Cardiac septum (tissue), 1 donor: ENCODE measurements at regions of chr1 and their contacts with region 1.

Region 1: DNA sequence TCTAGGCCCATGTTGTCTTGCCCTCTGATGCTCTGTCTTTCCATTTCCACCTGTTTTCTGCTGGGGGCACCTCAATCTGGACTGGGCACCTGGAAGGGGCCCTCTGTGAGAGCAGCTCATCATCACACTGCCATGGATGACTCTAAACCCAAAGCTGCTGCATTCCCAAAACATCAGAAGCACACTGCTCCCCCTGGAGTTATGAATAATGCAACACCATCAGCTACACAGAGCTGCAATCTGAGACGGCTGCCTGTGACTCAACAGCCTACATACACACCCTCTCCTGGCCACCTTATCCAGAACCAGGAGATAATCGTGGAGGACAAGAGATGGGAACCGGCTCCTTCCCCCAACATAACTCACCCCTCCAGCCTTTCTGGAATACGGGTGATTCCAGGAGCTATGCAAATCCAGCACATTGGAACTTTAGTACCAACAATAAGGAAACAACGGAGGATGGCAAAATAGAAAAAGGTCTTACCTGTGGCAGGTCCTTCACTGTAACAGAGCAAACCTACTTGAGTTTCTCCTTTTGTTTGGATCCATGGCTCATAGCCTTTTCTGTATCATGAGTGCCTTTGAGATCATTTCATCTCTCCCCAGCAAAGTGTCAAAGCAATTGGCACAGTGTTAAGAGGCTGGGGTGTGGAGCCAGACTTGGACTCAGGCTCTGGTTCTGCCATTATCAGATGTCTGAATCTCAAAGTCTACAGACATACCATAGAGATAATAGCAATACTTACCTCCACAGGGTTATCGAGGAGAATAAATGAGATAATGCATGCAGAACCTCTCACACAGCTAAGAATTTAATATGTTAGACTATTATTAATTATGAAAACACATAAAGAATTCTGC is 29.3 kb downstream of the AK2 start:
- DNase-seq: no peak

Region 2: DNA sequence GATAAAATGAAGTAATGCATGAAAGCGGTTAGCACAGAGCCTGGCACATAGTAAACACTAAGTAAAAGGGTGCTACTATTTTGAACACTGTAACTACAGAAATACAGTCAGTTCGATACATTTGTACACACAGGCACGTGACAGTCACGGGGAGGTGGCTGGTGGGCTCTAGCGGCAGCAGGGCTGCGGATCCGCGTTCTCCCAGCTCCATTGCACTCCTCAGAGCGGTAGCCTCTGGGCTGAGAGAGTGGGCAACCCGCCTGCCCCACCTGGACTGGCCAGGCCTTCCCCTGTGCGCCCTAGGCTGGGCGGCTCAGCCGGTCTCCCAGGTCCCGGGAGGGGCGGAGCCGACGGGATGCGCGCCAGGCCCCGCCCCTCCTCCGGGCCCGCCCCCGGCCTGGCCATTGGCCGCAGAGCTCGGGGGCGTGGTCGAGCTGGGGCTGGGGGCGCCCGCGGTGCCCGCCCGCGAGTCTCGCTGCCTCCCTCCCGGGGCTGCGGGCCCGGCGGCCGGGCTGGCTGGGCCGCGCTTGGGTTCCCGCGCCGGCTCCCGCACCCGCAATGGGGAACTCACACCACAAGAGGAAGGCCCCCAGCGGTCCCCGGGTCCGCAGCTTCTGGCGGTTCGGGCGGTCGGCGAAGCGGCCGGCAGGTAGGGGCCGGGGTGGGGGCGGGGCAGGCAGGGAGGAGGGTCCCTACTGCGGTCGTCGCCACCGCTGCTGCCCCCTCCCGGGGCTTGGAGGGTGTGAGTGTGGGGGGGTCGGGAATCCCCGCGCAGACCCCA is 253.7 kb before region 1 on chr1:
- intact Hi-C with region 1: no loop called
- DNase-seq: no peak

Region 3: DNA sequence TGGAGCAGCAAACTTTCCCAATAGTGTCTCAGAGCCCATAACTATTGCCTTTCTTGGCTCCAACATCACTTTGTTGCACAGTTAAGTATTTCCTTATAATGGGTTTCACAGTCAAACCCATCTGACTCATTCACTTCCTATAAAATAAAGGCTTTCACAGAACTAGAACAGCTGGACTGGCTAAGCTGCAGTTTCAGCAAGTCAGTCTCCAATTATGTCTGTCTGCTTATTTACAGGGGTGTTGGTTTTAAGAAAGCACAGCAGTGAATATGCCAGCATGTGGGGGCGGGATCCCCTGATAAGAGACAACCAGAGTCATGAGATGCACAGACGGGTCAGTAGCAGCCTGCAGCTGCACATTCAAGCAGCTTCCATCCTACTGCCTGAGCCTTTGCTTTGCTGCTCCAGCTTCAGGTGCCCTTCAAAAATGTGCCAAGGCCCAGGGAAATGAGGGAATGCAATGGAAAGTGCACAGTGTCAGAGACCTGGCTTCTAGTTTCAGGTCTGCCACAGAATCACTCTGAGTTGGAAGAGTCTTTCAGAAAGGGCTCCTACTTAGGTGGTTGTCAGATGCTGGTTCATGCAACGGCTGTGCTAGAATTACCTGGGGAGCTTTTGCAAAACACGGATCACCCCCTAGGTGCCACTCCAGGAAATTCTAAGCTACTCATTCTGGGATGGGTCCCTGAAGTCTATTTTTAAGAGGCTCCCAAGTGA is 67.6 kb before region 1 on chr1:
- intact Hi-C with region 1: loop called (anchors 5 kb)
- DNase-seq: no peak

Region 4: GRCh38 chr1:32964461-32965250 is 42.8 kb before region 1 on chr1 and contains the start of gene RNF19B:
- intact Hi-C with region 1: loop called (anchors 2 kb)
- DNase-seq: peak; percentile 98
- total RNA-seq, gene RNF19B: 17.5 TPM

Region 5: GRCh38 chr1:33045246-33045645 is 37.8 kb after region 1 on chr1:
- intact Hi-C with region 1: loop called (anchors 5 kb)
- DNase-seq: peak; percentile 72

Region 6: DNA sequence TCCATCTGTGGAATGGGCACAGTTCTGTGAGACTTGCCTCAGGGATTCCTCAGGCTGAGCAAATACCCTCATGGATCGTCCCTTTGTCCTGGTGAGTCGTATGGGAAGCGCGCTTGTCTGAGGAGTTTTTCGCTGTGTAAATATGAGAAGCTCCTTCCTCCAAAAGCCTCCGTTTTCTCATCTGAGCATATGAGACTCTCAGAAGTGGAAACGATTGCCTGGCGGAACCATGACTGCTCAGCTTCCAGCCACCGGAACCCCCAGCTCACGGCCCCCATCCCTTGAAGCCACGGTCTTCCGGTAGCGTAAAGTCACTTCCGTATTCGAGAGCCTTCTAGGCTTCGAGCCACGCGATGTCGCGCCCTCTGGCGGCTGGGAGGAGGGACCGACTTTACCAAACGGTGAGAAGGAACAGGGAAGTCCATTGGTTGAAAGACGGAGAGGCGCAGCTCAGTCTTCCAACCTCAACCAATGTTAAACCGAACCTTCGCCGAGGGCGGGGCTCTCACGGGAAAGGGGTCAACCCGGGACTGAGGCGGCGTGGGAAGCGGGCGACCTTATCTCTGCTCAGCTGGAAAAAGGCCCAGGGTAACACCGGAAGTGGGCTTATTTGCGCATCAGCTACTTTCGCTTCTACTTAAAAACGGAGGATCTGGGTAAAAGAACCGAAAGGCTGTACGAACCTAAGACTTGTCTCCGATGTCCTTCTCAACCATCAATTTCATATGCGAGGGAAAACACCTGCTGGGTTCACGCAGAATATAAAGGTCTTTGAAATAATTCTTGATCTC is 119.8 kb after region 1 on chr1:
- intact Hi-C with region 1: no loop called
- DNase-seq: peak; percentile 99